ENCODE measurements at regions of chr19 and their contacts with region 1.

Region 1: DNA sequence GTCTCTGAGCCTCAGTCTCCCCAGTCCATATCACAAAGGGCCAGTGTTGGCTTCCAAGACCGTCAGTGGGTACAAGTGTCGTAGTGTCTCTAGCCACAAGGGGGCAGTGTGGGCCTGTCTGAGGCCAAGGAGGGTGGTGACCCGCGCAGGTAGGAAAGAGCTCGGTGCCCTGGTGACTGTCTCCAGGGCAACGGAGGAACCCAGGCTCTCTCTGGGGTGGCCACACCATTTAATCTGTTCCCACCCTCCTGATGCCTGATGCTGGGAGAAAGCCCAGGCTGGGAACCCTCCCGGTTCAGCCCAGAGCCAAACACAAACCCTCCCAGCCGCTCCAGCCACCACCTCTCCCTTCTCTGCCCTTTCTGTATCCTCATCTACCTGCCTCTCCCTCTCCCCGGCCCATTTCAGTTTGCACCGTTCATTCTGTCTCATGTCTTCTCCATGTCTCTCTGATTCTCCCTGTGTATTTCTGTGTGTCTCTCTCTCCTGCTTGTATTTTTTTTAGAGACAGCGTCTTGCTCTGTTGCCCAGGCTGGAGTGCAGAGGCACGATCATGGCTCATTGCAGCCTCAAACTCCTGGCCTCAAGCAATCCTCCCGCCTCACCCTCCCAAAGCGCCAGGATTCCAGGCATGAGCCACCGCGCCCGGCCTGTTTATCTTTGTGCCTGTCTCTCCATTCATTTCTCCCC is 17.5 kb upstream of the MEIS3 start:
- H3K4me3 ChIP-seq: no peak overlapping the region
- H3K27ac ChIP-seq: no peak overlapping the region
- H3K4me1 ChIP-seq: no peaks in the 10 kb centered on the region
- CTCF ChIP-seq: peak; percentile 85

Region 2: DNA sequence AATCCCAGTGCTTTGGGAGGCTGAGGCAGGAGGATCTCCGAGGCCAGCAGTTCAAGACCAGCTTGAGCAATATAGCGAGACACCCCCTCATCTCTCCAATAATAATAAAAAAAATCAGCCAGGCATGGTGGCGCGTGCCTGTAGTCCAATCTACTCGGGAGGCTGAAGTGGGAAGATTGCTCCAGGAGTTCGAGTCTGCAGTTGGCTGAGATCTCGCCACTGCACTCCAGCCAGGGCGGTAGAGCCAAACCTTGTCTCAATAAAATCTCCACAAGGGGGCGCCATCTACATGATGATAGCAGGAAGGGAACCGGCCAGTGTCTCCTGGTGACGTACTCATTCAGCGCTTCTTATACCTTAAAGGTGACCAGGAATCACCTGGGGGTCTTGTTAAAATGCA is 140.8 kb before region 1 on chr19:
- CTCF ChIA-PET with region 1: interaction called, 10 read pairs
- POLR2A ChIA-PET with region 1: interaction called, 4 read pairs
- H3K4me3 ChIP-seq: no peak overlapping the region
- H3K27ac ChIP-seq: no peak overlapping the region
- H3K4me1 ChIP-seq: no peaks in the 10 kb centered on the region
- CTCF ChIP-seq: peak; percentile 70

Region 3: DNA sequence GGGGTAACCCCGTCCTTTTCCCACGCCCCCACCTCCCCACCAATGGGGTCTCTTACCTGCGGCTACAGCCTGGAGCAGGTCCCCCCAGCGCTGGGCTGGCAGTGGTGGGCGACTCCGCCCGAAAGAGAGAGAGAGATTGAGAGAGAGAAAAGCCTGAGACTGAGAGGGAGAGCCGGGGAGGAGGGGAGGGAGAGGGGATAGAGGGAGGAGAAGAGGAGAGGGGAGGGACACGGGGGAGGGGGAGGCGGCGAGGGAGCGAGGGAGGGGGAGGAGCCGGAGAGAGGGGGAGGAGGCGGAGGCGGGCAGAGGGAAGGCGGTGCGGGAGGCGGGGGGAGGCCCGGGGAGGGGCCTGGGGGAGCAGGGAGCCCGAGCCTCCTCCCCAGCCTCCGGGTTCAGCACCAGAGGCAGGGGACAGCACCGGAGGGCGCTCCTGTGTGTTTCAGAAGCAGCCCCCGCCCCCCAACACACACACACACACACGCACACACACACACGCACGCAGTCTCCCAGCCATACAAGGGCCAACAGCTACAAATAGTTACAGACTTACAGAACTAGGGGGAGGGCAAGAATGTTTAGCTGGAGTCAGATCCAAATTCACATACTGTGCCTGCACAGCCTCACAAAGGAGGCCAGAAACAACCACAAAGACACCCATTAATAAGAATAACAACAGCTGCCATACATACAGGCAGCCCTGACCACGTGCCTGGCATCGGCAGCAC is 35.0 kb after region 1 on chr19 and contains the start of gene SLC8A2:
- CTCF ChIA-PET with region 1: interaction called, 17 read pairs
- POLR2A ChIA-PET with region 1: interaction called, 6 read pairs
- H3K4me3 ChIP-seq: peak within 1 kb of the TSS; percentile 6; the same call in 1 of the 2 replicates
- H3K27ac ChIP-seq: no peak within 1 kb of the TSS
- H3K4me1 ChIP-seq: no peaks in the 10 kb centered on the region
- CTCF ChIP-seq: no peak

Region 4: GRCh38 chr19:47514869-47515588 is 78.2 kb after region 1 on chr19 and contains the start of gene NAPA:
- CTCF ChIA-PET with region 1: interaction called, 19 read pairs
- POLR2A ChIA-PET with region 1: no interaction called
- H3K4me3 ChIP-seq: peak within 1 kb of the TSS; percentile 75
- H3K27ac ChIP-seq: peak within 1 kb of the TSS; percentile 73
- H3K4me1 ChIP-seq: peaks cover 17% of the 10 kb centered on the region
- CTCF ChIP-seq: no peak

Region 5: DNA sequence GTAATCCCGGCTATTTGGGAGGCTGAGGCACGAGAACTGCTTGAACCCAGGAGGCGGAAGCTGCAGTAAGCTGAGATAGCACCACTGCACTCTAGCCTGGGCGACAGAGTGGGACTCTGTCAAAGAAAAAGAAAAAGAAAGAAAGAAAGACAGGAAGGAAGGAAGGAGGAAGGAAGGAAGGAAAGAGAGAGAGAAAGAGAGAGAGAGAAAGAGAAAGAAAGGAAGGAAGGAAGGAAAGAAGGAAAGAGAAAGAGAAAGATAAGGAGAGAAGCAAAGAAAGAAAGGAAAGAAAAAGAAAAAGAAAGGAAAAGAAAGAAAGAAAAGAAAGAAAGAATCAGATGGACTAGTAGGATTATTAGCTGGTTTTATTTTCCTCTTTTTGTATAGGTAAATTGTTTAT is 113.3 kb after region 1 on chr19:
- CTCF ChIA-PET with region 1: no interaction called
- POLR2A ChIA-PET with region 1: no interaction called
- H3K4me3 ChIP-seq: no peak overlapping the region
- H3K27ac ChIP-seq: no peak overlapping the region
- H3K4me1 ChIP-seq: 0 out of 2 replicates have a peak, but pooled peaks cover 2% of the 10 kb centered on the region
- CTCF ChIP-seq: no peak

Region 6: DNA sequence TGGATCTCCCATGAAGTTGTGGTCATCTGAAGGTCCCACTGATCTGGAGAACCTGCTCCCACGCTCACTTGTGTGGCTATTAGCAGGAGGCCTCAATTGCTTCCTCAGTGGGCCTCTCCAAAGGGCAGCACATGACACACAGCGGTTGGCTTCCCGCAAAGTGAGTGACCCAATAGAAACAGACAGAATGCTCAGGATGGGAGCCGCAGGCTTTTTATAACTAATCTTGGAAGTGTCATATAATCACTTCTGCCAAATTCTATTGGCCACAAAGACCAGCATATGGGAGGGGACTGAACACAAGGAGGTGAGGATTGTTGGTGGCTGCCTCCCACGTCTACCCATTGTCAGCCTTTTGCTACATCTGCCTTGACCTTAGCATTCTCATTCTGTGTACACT is 254.2 kb after region 1 on chr19:
- CTCF ChIA-PET with region 1: interaction called, 102 read pairs
- POLR2A ChIA-PET with region 1: no interaction called
- H3K4me3 ChIP-seq: no peak overlapping the region
- H3K27ac ChIP-seq: no peak overlapping the region
- H3K4me1 ChIP-seq: no peaks in the 10 kb centered on the region
- CTCF ChIP-seq: no peak

Region 7: DNA sequence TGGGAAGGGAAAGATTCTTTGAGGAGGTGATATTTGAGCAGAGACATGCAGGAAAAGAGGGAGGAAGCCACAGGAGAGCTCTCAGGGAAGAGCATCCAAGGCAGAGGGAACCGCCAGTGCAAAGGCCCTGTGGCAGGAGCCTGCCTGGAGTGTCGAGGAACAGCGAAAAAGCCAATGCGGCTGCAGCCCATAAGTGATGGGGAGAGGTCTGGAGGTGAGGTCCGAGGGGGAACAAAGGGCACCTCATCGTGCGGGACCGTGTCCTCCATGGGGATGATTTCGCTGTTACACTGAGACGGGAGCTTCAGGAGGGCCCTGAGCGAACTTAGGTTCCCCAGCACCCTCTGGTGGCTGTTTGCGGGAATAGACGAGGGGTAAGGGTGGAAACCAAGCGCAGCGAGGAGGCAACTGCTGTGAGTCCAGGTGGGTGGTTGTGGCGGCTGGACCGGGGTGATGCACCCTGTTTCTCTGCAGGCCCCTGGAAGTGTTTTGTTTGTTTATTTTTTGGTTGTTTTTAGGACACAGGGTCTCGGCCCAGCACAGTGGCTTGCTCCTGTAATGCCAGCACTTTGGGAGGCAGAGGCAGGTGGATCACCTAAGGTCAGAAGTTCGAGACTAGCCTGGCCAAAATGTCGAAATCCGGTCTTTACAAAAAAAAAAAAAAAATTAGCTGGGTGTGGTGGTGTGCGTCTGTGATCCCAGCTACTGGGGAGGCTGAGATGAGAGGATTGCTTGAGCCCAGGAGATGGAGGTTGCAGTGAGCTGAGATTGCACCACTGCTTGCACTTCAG is 270.5 kb after region 1 on chr19:
- CTCF ChIA-PET with region 1: interaction called, 121 read pairs
- POLR2A ChIA-PET with region 1: interaction called, 5 read pairs
- H3K4me3 ChIP-seq: no peak overlapping the region
- H3K27ac ChIP-seq: no peak overlapping the region
- H3K4me1 ChIP-seq: no peaks in the 10 kb centered on the region
- CTCF ChIP-seq: peak; percentile 84